Heart left ventricle (tissue), 16 donors: ENCODE measurements at regions of chr22 and their contacts with region 1.

Region 1: DNA sequence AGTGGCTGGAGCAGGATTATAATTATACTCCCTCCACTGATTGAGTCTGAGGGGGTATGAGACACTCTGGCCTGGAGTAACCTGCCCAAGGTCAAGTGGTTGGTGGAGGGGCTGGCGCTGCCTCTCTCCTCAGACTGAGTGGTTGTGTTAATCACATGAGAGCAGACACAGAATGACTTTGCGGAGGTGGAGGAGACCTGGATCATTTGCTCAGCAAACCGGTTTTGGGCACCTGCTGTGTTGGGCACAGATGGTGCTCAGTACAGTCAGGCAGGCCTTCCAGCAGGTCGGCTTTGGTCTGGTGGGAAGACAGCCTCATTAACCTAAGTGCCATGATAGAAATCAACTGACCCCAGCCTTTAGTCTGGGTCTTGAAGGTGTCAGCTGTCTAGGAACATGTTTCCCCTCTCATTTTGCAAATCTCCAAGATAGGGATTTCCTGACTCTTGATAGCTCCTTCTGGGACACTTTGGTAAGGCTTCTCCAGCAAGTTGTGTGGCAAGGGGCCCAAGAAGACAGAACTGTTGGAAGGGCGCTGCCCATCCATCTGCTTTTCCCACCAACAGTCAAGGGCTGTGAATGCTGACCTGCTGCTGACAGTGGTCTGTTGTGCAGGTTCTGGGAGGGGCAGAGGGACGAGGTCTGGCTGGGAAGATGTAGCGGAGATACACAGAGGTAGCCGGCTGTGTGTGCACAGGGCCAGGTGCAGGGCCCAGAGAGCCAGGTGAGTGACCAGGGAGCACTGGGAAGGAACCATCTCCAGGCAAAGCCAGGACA is 12.1 kb downstream of the BCR start:
- DNase-seq: peak in 1 of 5 donors; percentile 38
- ATAC-seq: peak in 3 of 4 donors; percentile 33 to 52 (median 50)
- H3K4me3 ChIP-seq: no peak overlapping the region
- H3K27ac ChIP-seq: peak overlapping the region in 2 of 12 donors; percentile 29 to 57
- H3K4me1 ChIP-seq: peaks cover 0 to 64% (median 14%) of the 10 kb centered on the region in 12 donors
- H3K27me3 ChIP-seq: no peaks in the 10 kb centered on the region
- CTCF ChIP-seq: no peak
- POLR2A ChIP-seq: no peak

Region 2: GRCh38 chr22:23263651-23264555 is 71.5 kb after region 1 on chr22:
- intact Hi-C with region 1: loop called in 1 of 10 experiments (anchors 5 kb)
- DNase-seq: no peak
- ATAC-seq: peak in 3 of 4 donors; percentile 10 to 55 (median 18)
- H3K4me3 ChIP-seq: no peak overlapping the region
- H3K27ac ChIP-seq: no peak overlapping the region
- H3K4me1 ChIP-seq: peaks cover 0 to 6% (median 0%) of the 10 kb centered on the region in 12 donors
- H3K27me3 ChIP-seq: no peaks in the 10 kb centered on the region
- CTCF ChIP-seq: no peak
- POLR2A ChIP-seq: no peak

Region 3: DNA sequence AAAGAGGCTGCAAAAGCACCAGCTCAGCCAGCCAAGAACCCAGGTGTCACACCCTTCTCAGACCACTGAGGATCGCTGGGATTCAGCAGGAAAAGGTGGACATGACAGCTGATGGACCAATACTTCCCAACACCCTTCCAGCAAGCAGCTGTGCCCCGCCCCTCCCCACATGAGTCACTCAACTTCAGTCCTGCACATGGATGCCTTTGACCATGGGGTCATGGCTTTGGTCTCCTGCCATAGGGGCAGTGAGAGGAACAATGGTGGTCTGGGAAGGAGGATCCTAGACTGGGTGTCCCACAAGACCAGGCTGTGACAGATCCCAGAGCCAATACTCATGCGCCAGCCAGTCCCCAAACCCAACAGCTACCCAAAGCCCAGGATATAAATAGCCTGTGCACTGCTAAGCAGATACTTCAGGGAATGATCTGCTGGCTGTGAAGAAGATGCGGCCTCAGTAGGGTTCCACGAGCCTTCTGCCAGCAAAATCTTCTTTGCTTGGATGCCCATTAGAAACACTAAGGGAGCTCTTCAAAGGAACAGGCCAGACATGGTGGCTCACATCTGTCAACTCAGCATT is 492.9 kb after region 1 on chr22:
- intact Hi-C with region 1: loop called in 1 of 10 experiments (anchors 10 kb)
- DNase-seq: peak in 1 of 5 donors; percentile 44
- ATAC-seq: peak in 3 of 4 donors; percentile 64 to 71 (median 66)
- H3K4me3 ChIP-seq: no peak overlapping the region
- H3K27ac ChIP-seq: peak overlapping the region in 1 of 12 donors; percentile 69
- H3K4me1 ChIP-seq: peaks cover 0 to 33% (median 21%) of the 10 kb centered on the region in 12 donors
- H3K27me3 ChIP-seq: no peaks in the 10 kb centered on the region
- CTCF ChIP-seq: no peak
- POLR2A ChIP-seq: no peak